Caco-2 (cell line): ENCODE measurements at regions of chrX and their contacts with region 1.

Region 1: GRCh38 chrX:153927922-153928760 is 2.1 kb upstream of the ARHGAP4 start:
- DNase-seq: peak; percentile 95
- H3K4me3 ChIP-seq: peak overlapping the region; percentile 42
- H3K4me3 Mint-ChIP-seq: peak overlapping the region; percentile 64
- H3K27ac Mint-ChIP-seq: peak overlapping the region; percentile 73
- H3K4me1 ChIP-seq: peaks cover 8% of the 10 kb centered on the region; the same call in 1 of the 2 replicates
- H3K4me1 Mint-ChIP-seq: no peaks in the 10 kb centered on the region
- H3K27me3 ChIP-seq: no peaks in the 10 kb centered on the region
- H3K27me3 Mint-ChIP-seq: no peaks in the 10 kb centered on the region
- CTCF ChIP-seq: peak in 1 of 2 experiments; percentile 4

Region 2: GRCh38 chrX:153763989-153764755 is 164.0 kb before region 1 on chrX and contains the start of gene PLXNB3:
- CTCF ChIA-PET with region 1: no interaction called
- POLR2A ChIA-PET with region 1: no interaction called
- intact Hi-C with region 1: loop called (anchors 1 kb)
- DNase-seq: peak; percentile 66 to 75
- H3K4me3 ChIP-seq: no peak within 1 kb of the TSS
- H3K4me3 Mint-ChIP-seq: no peak within 1 kb of the TSS
- H3K27ac Mint-ChIP-seq: no peak within 1 kb of the TSS
- H3K4me1 ChIP-seq: no peaks in the 10 kb centered on the region
- H3K4me1 Mint-ChIP-seq: no peaks in the 10 kb centered on the region
- H3K27me3 ChIP-seq: no peaks in the 10 kb centered on the region
- H3K27me3 Mint-ChIP-seq: no peaks in the 10 kb centered on the region
- CTCF ChIP-seq: peak; percentile 58 to 75
- total RNA-seq, gene PLXNB3: 0.16 TPM in 1 of 2 replicates, not detected in the other

Region 3: GRCh38 chrX:153794018-153794896 is 133.9 kb before region 1 on chrX and contains the starts of genes IDH3G and SSR4:
- CTCF ChIA-PET with region 1: no interaction called
- POLR2A ChIA-PET with region 1: interaction called, 8 read pairs
- intact Hi-C with region 1: loop called (anchors 10 kb)
- DNase-seq: peak; percentile 92
- H3K4me3 ChIP-seq: peak within 1 kb of the TSS; percentile 52
- H3K4me3 Mint-ChIP-seq: peak within 1 kb of the TSS; percentile 90
- H3K27ac Mint-ChIP-seq: peak within 1 kb of the TSS; percentile 89
- H3K4me1 ChIP-seq: 0 out of 2 replicates have a peak, but pooled peaks cover 4% of the 10 kb centered on the region
- H3K4me1 Mint-ChIP-seq: no peaks in the 10 kb centered on the region
- H3K27me3 ChIP-seq: no peaks in the 10 kb centered on the region
- H3K27me3 Mint-ChIP-seq: no peaks in the 10 kb centered on the region
- CTCF ChIP-seq: no peak
- total RNA-seq, gene IDH3G: 53.3 and 54.0 TPM in 2 replicates
- total RNA-seq, gene SSR4: 353 and 373 TPM in 2 replicates

Region 4: DNA sequence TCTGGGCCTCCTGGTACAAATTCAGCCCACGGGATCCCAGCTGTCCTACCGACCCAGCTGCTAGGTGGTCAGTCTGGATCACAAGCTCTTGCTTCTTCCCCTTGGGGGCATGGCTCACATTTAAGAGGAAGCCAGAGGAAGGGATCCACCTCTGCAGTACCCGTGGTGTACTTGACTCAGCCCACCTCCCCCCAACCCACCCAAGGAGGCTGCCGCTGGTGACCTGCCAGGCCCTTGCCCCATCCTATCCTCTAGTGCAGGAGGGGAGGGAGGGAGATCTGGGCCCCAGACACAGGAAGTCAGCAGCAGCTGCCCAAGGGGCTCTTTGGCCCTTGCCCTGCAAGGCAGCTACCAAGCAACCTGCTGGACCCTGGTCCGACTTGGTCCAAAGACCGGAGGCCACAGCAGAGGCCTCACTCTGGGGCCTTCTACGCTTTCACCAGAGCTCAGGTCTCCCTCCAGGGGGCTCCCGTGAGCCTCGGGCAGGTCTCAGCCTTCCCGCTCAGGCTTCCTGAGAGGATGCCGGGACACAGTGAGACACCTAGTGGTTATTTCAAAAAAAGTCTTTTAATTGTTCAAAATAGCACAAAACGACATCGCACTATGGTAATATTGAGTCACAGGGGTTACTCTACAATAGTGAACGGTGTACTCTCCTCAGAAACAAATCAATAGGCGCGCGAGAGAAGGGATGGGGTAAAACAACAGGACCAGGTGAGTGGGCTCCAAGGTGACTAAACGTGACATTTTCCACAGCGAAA is 19.0 kb after region 1 on chrX:
- CTCF ChIA-PET with region 1: interaction called, 37 read pairs
- POLR2A ChIA-PET with region 1: interaction called, 4 read pairs
- intact Hi-C with region 1: loop called (anchors 1 kb)
- DNase-seq: peak; percentile 83 to 86
- H3K4me3 ChIP-seq: no peak overlapping the region
- H3K4me3 Mint-ChIP-seq: no peak overlapping the region
- H3K27ac Mint-ChIP-seq: no peak overlapping the region
- H3K4me1 ChIP-seq: no peaks in the 10 kb centered on the region
- H3K4me1 Mint-ChIP-seq: no peaks in the 10 kb centered on the region
- H3K27me3 ChIP-seq: no peaks in the 10 kb centered on the region
- H3K27me3 Mint-ChIP-seq: no peaks in the 10 kb centered on the region
- CTCF ChIP-seq: peak; percentile 81 to 88

Region 5: DNA sequence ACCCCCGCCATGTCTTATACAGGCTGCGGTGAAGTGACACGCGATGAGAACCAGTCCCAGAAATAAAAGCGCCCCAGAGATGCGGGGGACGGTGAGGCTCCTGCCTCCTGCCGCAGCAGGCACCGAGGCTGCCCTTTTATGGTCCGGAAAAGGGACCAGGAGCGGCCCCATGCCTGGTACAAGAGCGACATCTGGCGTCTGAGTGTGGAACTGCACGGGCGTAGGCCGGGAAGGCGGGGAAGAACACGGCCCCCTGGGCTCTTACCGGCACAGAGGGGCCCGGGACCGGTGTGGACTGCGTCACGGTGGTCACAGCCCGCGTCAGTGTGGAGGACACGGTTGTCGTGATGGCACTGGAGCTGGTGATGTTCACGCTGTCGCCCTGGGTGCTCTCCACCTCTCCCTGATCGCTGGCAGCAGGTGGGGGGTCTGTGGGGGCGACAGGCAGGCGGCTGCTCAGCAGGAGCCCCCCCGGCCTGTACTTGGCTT is 25.2 kb after region 1 on chrX:
- CTCF ChIA-PET with region 1: interaction called, 37 read pairs
- POLR2A ChIA-PET with region 1: no interaction called
- intact Hi-C with region 1: loop called (anchors 1 kb)
- DNase-seq: peak; percentile 51 to 69
- H3K4me3 ChIP-seq: no peak overlapping the region
- H3K4me3 Mint-ChIP-seq: no peak overlapping the region
- H3K27ac Mint-ChIP-seq: no peak overlapping the region
- H3K4me1 ChIP-seq: no peaks in the 10 kb centered on the region
- H3K4me1 Mint-ChIP-seq: no peaks in the 10 kb centered on the region
- H3K27me3 ChIP-seq: no peaks in the 10 kb centered on the region
- H3K27me3 Mint-ChIP-seq: no peaks in the 10 kb centered on the region
- CTCF ChIP-seq: peak; percentile 72 to 82

Region 6: DNA sequence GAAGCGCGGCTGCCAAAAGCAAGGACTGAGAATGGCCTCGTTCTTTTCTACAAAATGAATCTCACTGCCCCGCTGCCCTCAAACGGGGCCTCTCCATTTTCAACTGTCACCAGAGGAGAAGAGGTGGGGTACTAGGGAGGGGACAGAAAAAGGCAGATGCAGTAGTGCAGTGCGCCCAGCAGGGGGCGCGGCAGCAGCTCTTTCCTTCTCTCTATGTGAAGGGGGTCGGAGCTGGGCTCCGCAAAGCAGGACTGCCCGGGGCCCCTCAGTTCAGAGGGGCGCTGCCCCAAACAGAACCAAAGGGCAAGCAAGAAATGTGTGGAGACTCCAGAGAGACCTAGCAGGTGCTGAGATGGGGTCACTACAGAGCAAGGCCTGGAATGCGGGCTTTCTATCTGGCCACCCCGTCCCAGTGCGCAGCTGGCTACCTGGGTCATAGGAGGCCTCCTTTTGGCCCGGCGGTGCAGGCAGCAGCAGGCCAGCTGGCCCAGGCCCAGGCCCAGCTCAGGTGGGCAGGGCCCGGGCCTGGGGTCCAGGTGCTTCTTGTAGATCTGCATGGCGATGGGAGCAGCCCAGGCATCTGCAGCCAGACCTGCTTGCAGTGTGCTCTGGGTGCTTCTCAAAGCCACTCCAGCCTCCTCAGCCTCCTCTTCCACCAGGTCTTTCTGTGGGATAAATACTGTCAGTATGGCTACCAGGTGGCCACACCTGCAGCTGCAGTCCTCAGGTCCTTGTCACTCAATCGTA is 85.6 kb after region 1 on chrX:
- CTCF ChIA-PET with region 1: no interaction called
- POLR2A ChIA-PET with region 1: no interaction called
- intact Hi-C with region 1: no loop called
- DNase-seq: peak in 1 of 2 experiments; percentile 49
- H3K4me3 ChIP-seq: no peak overlapping the region
- H3K4me3 Mint-ChIP-seq: no peak overlapping the region
- H3K27ac Mint-ChIP-seq: no peak overlapping the region
- H3K4me1 ChIP-seq: no peaks in the 10 kb centered on the region
- H3K4me1 Mint-ChIP-seq: no peaks in the 10 kb centered on the region
- H3K27me3 ChIP-seq: no peaks in the 10 kb centered on the region
- H3K27me3 Mint-ChIP-seq: no peaks in the 10 kb centered on the region
- CTCF ChIP-seq: peak; percentile 77 to 79